Activated T-helper 1 cell treated with anti-CD3 and anti-CD28 coated beads, Interleukin-12 subunit alpha, Interleukin-12 subunit beta, Interleukin-2, Interleukin-4 antibody, amounts not matched to agents 30 ng/mL and 10 ng/mL and 1 ng/mL, durations not matched to agents 14 hours and 24 hours and 36 hours (primary cell): ENCODE measurements at regions of chr5 and their contacts with region 1.

Region 1: DNA sequence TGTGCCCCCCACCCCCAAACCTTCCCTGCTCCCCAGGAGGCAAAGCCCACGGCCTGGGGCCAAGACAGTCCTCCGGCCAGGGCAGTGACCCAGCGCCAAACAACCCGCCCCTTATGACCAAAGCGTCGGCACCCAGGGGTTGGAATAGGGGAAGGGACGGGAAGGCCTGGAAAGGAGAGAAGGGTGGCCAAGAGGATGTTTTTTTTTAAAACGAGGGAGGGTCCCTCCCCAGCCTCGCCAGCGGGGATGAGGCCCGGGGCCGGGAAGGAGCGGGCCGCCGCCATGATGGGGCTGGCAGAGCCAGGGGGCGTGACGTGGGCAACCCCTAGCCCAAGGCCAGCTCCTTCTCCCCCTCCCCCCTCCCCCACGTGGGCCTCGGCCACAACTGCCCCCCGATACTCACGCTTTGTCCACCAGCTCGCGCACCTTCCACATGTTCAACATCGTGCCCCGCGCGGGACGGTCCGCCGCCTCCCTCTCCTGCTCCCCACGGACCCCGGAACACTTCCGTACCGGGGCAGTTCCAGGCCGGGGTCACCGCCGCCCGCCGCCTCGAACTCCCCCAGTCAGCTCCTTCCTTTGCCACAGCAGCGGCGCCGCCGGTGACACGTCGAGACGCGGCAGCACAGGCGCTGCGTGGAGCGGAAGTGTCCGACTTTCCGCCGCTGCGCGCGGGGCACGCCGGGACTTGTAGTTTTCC is at the start of gene CLINT1:
- DNase-seq: peak; percentile 86
- H3K4me3 Mint-ChIP-seq: peak within 1 kb of the TSS; percentile 90
- H3K27ac Mint-ChIP-seq: peak within 1 kb of the TSS; percentile 92
- H3K4me1 Mint-ChIP-seq: peaks cover 71% of the 10 kb centered on the region
- H3K27me3 Mint-ChIP-seq: no peaks in the 10 kb centered on the region
- total RNA-seq, gene CLINT1: 90.5 and 93.1 TPM in 2 replicates

Region 2: GRCh38 chr5:157271740-157272271 is 586.9 kb before region 1 on chr5:
- intact Hi-C with region 1: loop called (anchors 5 kb)
- DNase-seq: peak; percentile 85
- H3K4me3 Mint-ChIP-seq: peak overlapping the region; percentile 74
- H3K27ac Mint-ChIP-seq: peak overlapping the region; percentile 100
- H3K4me1 Mint-ChIP-seq: peaks cover 96% of the 10 kb centered on the region
- H3K27me3 Mint-ChIP-seq: no peaks in the 10 kb centered on the region

Region 3: GRCh38 chr5:157540707-157541446 is 317.8 kb before region 1 on chr5:
- intact Hi-C with region 1: loop called (anchors 2 kb)
- DNase-seq: peak; percentile 55
- H3K4me3 Mint-ChIP-seq: peak overlapping the region; percentile 63
- H3K27ac Mint-ChIP-seq: peak overlapping the region; percentile 93
- H3K4me1 Mint-ChIP-seq: peaks cover 90% of the 10 kb centered on the region
- H3K27me3 Mint-ChIP-seq: no peaks in the 10 kb centered on the region

Region 4: GRCh38 chr5:157743163-157744050 is 115.3 kb before region 1 on chr5 and contains the start of gene LSM11:
- intact Hi-C with region 1: loop called (anchors 1 kb)
- DNase-seq: peak; percentile 90
- H3K4me3 Mint-ChIP-seq: peak within 1 kb of the TSS; percentile 98
- H3K27ac Mint-ChIP-seq: peak within 1 kb of the TSS; percentile 93
- H3K4me1 Mint-ChIP-seq: peaks cover 46% of the 10 kb centered on the region
- H3K27me3 Mint-ChIP-seq: peaks cover 3% of the 10 kb centered on the region
- total RNA-seq, gene LSM11: 8.8 and 9.0 TPM in 2 replicates

Region 5: DNA sequence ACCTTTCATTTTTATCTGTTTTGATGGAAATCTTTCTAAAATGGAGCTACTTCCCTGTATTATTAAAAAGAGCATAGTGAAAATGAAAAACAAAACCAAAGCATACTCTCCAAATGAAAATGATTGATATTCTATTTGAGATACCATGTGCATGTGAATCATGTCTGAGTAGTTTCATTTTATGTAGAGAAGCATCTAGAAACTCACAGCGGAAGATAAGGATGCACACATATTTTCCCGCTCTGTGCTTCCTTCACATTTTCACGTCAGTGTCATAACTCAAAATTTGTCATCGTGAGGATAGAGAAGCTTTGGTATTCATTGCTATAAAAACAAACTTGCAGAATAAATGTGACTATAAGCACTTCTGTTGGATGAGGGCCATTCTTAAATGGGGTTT is 34.3 kb after region 1 on chr5:
- intact Hi-C with region 1: loop called (anchors 2 kb)
- DNase-seq: no peak
- H3K4me3 Mint-ChIP-seq: no peak overlapping the region
- H3K27ac Mint-ChIP-seq: no peak overlapping the region
- H3K4me1 Mint-ChIP-seq: peaks cover 13% of the 10 kb centered on the region
- H3K27me3 Mint-ChIP-seq: no peaks in the 10 kb centered on the region

Region 6: GRCh38 chr5:157941616-157942015 is 82.9 kb after region 1 on chr5:
- intact Hi-C with region 1: no loop called
- DNase-seq: no peak
- H3K4me3 Mint-ChIP-seq: no peak overlapping the region
- H3K27ac Mint-ChIP-seq: no peak overlapping the region
- H3K4me1 Mint-ChIP-seq: no peaks in the 10 kb centered on the region
- H3K27me3 Mint-ChIP-seq: no peaks in the 10 kb centered on the region

Region 7: DNA sequence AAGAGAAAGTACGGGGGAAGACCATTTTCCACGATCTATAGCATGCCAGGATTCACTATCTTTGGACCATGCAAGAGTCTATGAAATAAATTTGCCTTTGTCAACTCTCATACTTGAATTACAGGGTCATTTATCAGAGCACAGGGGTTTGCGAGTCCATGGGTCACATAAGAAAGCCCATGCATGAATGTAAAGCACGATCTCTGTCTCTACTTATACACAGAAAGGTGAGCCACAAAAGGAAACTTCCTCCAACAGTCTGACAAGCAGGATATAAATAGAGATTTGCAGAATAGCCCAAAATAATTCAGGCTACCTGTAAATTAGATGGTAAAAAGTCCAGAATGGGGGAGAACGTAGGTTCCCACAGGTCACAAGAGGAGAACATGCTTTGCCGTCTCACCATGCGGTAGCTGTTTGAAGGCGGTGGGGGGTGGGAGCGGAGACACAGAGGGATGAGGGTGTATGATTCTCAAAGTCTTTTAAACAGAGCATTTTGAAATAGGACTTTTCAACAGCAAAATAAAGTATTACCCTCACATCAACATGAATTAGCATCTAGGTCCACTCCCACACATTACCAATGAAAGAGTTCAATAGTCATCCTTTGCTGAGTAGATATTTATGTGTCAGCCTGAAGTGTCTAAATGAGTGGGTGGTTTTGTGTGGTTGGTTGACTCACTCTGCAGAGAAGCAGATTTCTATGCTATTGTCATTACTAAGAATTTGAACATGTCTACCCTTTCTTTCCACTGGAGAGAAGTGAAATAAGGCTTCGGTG is 961.4 kb after region 1 on chr5:
- intact Hi-C with region 1: loop called (anchors 5 kb)
- DNase-seq: no peak
- H3K4me3 Mint-ChIP-seq: no peak overlapping the region
- H3K27ac Mint-ChIP-seq: peak overlapping the region; percentile 80
- H3K4me1 Mint-ChIP-seq: peaks cover 55% of the 10 kb centered on the region
- H3K27me3 Mint-ChIP-seq: no peaks in the 10 kb centered on the region